Activated T-helper 1 cell treated with anti-CD3 and anti-CD28 coated beads, Interleukin-12 subunit alpha, Interleukin-12 subunit beta, Interleukin-2, Interleukin-4 antibody, amounts not matched to agents 30 ng/mL and 10 ng/mL and 1 ng/mL, durations not matched to agents 14 hours and 24 hours and 36 hours (primary cell): ENCODE measurements at regions of chr6 and their contacts with region 1.

Region 1: GRCh38 chr6:25942561-25943147 is 12.2 kb upstream of the SLC17A2 start:
- DNase-seq: no peak
- H3K4me3 Mint-ChIP-seq: no peak overlapping the region
- H3K27ac Mint-ChIP-seq: no peak overlapping the region
- H3K4me1 Mint-ChIP-seq: peaks cover 28% of the 10 kb centered on the region
- H3K27me3 Mint-ChIP-seq: peaks cover 2% of the 10 kb centered on the region

Region 2: DNA sequence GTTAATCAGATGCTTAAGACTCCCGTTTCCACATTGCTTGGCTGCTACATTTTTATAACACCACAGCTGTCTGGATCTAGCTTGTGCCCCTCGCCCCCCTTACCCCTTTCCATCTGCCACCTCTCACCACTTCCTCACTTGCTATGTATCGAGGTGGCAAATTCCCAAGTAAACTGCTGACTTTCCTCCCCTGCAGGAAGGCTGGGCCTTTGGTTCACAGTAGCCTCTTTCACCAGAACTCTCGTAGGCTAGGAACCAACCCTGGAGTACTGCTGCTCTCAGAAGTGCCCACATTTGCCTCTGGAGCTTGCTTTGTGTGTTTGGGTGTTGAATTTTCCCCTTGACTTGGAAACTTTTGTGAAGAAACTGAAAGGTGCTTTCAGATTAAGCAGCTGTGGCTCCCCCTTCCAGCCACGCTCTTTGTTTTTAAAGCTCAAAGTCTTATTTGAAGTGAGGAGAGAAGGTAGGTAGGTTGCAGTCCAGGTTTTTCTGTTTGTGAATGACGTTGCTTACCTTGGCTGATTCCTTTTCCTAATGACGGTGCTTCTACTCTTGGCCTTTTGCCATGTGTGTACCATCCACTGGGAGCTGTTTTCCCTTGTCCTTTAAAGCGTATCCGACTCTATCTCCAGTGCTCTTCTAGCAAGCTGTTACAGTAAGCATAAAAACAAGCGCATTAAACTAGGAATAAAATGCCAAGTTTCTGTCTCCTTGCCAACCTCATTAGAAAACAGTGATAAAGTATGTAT is 573.0 kb before region 1 on chr6:
- intact Hi-C with region 1: loop called (anchors 1 kb)
- DNase-seq: peak; percentile 7
- H3K4me3 Mint-ChIP-seq: peak overlapping the region; percentile 62
- H3K27ac Mint-ChIP-seq: peak overlapping the region; percentile 91
- H3K4me1 Mint-ChIP-seq: peaks cover 73% of the 10 kb centered on the region
- H3K27me3 Mint-ChIP-seq: no peaks in the 10 kb centered on the region

Region 3: DNA sequence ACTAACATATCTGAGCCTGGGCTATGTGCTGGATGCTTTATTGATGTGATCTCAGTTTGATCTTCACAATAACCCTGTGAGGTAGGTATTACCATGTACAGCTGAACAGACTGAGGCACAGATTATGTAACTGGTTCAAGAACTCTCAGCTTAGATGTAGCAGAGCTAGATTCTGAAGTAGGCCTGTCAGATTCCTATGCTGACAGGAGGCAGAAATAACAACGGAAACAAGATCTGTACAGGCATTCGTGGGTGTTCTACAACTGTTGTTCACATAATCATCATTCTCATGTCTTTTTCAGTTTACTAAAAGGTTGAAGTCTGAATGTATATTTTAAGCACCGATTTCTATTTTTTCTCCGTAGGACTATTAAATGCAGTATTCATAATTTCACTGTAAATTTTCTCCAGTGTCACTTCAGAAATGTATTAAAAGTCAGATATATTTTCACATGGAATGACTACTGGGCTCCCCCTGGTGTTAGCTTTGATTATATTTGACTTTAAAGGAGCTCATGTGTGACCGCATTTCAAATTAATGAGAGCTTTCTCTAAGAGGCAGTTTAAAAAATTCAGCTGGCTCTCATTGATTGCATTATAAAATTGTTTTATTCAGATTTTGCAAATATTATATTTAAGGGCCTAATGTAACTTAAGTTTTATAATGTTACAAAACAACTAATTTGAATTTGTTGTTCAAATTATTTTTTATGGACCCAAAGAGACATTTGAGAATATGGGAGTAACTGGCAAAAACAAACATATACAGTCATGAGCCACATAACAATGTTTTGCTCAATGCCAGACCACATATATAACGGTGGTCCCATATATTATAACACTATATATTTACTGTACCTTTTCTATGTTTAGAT is 224.6 kb before region 1 on chr6:
- intact Hi-C with region 1: loop called (anchors 1 kb)
- DNase-seq: no peak
- H3K4me3 Mint-ChIP-seq: no peak overlapping the region
- H3K27ac Mint-ChIP-seq: no peak overlapping the region
- H3K4me1 Mint-ChIP-seq: no peaks in the 10 kb centered on the region
- H3K27me3 Mint-ChIP-seq: peaks cover 7% of the 10 kb centered on the region

Region 4: GRCh38 chr6:25788305-25788922 is 154.2 kb before region 1 on chr6:
- intact Hi-C with region 1: loop called (anchors 1 kb)
- DNase-seq: peak; percentile 13
- H3K4me3 Mint-ChIP-seq: no peak overlapping the region
- H3K27ac Mint-ChIP-seq: no peak overlapping the region
- H3K4me1 Mint-ChIP-seq: peaks cover 5% of the 10 kb centered on the region
- H3K27me3 Mint-ChIP-seq: peaks cover 4% of the 10 kb centered on the region

Region 5: DNA sequence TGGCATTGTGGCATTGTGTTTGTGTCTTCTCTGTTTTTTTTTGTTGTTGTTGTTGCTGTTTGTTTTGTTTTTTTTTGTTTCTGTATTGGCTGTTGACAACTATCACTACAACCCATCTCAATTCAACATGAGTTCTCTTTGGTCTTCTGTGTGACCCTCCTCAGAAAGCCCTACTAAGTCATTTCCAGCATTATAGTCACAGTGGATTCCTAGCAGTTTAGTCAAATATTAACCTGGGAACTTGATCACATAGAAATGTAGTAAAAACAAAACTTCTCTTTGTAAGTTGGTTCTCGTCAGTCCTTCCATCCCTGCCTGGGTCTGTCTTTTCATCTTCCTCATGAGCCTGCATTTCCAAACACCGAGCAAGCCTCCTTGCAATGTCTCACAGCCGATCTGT is 28.9 kb before region 1 on chr6:
- intact Hi-C with region 1: loop called (anchors 2 kb)
- DNase-seq: no peak
- H3K4me3 Mint-ChIP-seq: no peak overlapping the region
- H3K27ac Mint-ChIP-seq: peak overlapping the region; percentile 81
- H3K4me1 Mint-ChIP-seq: peaks cover 21% of the 10 kb centered on the region
- H3K27me3 Mint-ChIP-seq: no peaks in the 10 kb centered on the region

Region 6: DNA sequence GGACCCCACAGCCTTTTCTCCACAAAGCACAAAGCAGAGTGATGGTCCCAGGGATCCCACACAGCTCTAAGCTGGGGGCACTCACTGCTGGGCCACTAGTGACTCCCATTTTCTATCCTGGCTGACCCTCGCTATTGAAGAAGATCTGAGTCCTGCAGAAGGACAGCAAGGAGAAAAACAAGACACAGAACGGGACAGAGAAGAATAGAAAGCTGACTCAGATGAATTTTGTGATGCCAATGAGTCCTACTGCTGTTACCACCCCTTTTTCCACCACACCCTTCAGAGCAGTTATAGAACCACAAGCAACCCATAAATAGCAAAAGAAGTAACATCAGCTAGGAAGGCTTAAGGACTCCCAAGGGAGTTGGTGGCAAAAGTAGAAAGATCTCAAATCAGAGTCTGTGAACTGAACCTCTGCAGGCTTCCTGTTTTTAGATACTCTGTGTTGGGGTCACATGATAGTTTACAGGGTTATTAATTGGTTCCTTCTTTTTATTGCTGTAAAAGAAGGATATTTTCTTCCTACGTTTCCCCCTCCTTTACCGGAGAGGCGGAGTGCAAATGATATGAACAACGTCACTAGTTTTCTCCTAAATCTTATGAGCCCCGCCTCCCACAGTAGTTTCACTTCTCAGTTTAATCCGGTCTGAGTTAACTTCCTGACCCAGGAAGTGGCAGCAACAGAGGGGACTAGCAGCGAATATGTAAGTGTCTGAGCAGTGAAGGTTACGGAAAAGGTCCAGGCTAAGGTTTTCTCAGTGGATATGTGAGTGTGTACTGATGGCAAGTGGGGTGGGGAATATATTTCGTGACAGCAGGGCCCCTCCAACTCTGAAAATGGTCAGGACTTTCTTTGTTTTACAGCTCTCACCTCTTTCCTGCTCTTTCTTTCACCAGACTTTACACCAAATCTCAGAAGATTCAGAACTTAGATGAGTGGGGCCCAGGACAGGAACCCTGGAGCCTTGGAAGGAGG is 19.8 kb after region 1 on chr6 and contains the start of gene TRIM38:
- intact Hi-C with region 1: loop called (anchors 1 kb)
- DNase-seq: peak; percentile 76
- H3K4me3 Mint-ChIP-seq: peak within 1 kb of the TSS; percentile 94
- H3K27ac Mint-ChIP-seq: peak within 1 kb of the TSS; percentile 95
- H3K4me1 Mint-ChIP-seq: peaks cover 85% of the 10 kb centered on the region
- H3K27me3 Mint-ChIP-seq: no peaks in the 10 kb centered on the region
- total RNA-seq, gene TRIM38: 24.5 and 25.3 TPM in 2 replicates

Region 7: GRCh38 chr6:26025894-26026832 is 83.5 kb after region 1 on chr6:
- intact Hi-C with region 1: loop called (anchors 2 kb)
- DNase-seq: peak; percentile 88
- H3K4me3 Mint-ChIP-seq: peak overlapping the region; percentile 85
- H3K27ac Mint-ChIP-seq: peak overlapping the region; percentile 96
- H3K4me1 Mint-ChIP-seq: peaks cover 93% of the 10 kb centered on the region
- H3K27me3 Mint-ChIP-seq: no peaks in the 10 kb centered on the region